ENCODE measurements at regions of chrX and their contacts with region 1.

Region 1: GRCh38 chrX:140057001-140057411 is 91.7 kb upstream of the CXorf66 start:
- DNase-seq: peak; percentile 56 to 64 (median 62)
- H3K4me3 ChIP-seq: peak overlapping the region in 1 of 3 experiments; percentile 32
- H3K4me3 Mint-ChIP-seq: peak overlapping the region; percentile 56 to 73
- H3K27ac ChIP-seq: no peak overlapping the region
- H3K27ac Mint-ChIP-seq: no peak overlapping the region
- H3K4me1 ChIP-seq: peaks cover 9 to 10% of the 10 kb centered on the region in 2 donors
- H3K4me1 Mint-ChIP-seq: peaks cover 19% of the 10 kb centered on the region
- H3K27me3 ChIP-seq: no peaks in the 10 kb centered on the region
- H3K27me3 Mint-ChIP-seq: peaks cover 1 to 13% (median 10%) of the 10 kb centered on the region in 3 donors
- CTCF ChIP-seq: peak; percentile 74

Region 2: GRCh38 chrX:140141444-140142029 is 84.5 kb after region 1 on chrX:
- intact Hi-C with region 1: loop called (anchors 2 to 5 kb)
- DNase-seq: peak; percentile 6 to 25 (median 17)
- H3K4me3 ChIP-seq: no peak overlapping the region
- H3K4me3 Mint-ChIP-seq: no peak overlapping the region
- H3K27ac ChIP-seq: no peak overlapping the region
- H3K27ac Mint-ChIP-seq: no peak overlapping the region
- H3K4me1 ChIP-seq: no peaks in the 10 kb centered on the region
- H3K4me1 Mint-ChIP-seq: no peaks in the 10 kb centered on the region
- H3K27me3 ChIP-seq: no peaks in the 10 kb centered on the region
- H3K27me3 Mint-ChIP-seq: peaks cover 0 to 2% (median 0%) of the 10 kb centered on the region in 3 donors
- CTCF ChIP-seq: peak; percentile 67

Region 3: GRCh38 chrX:140456602-140457001 is 399.6 kb after region 1 on chrX:
- intact Hi-C with region 1: no loop called
- DNase-seq: no peak
- H3K4me3 ChIP-seq: no peak overlapping the region
- H3K4me3 Mint-ChIP-seq: no peak overlapping the region
- H3K27ac ChIP-seq: no peak overlapping the region
- H3K27ac Mint-ChIP-seq: no peak overlapping the region
- H3K4me1 ChIP-seq: no peaks in the 10 kb centered on the region
- H3K4me1 Mint-ChIP-seq: no peaks in the 10 kb centered on the region
- H3K27me3 ChIP-seq: no peaks in the 10 kb centered on the region
- H3K27me3 Mint-ChIP-seq: no peaks in the 10 kb centered on the region
- CTCF ChIP-seq: no peak